Caco-2 (cell line): ENCODE measurements at regions of chr12 and their contacts with region 1.

Region 1: DNA sequence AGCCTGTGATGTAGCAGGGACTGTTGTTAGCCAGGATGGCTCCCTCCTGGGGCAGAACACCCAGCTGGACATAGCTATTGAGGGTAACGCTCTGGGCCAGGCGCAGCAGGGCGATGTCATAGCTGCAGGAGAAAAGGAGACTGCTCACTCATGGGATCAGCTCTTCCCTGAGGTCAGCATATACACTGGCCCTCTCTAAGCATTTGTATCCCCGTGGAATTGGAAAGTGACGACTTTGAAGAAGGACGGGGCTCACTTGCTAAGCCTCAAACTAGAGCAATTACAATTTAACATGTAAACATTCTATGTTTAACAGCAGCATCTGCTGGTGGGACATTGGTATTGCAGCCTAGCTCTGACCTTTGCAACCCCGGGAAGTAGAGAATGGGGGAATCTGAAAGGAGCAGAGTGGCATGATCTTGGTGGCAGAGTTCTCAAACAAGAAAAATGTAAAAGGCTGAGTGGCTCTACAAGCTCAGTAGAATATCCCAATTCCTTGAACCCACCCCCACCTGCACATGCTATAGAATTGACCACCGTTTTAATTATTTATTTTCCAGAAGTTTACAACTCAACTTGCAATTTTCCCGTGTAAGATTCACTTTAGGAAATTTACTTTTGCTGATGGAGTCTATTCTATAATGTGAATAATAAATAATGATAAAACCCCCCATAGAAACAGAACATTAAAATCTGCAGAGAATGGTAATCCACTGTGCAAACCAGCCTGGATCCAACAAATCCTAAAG is 5.0 kb downstream of the CELA1 start:
- DNase-seq: peak; percentile 73 to 84
- H3K4me3 ChIP-seq: peak overlapping the region; percentile 27
- H3K4me3 Mint-ChIP-seq: peak overlapping the region; percentile 67
- H3K27ac Mint-ChIP-seq: peak overlapping the region; percentile 79
- H3K4me1 ChIP-seq: peaks cover 10% of the 10 kb centered on the region
- H3K4me1 Mint-ChIP-seq: peaks cover 24% of the 10 kb centered on the region
- H3K27me3 ChIP-seq: no peaks in the 10 kb centered on the region
- H3K27me3 Mint-ChIP-seq: no peaks in the 10 kb centered on the region
- CTCF ChIP-seq: peak; percentile 99

Region 2: GRCh38 chr12:51047655-51048540 is 293.5 kb before region 1 on chr12 and contains the start of gene LETMD1:
- CTCF ChIA-PET with region 1: interaction called, 4 read pairs
- POLR2A ChIA-PET with region 1: no interaction called
- intact Hi-C with region 1: loop called (anchors 1 kb)
- DNase-seq: peak; percentile 96 to 98
- H3K4me3 ChIP-seq: peak within 1 kb of the TSS; percentile 64
- H3K4me3 Mint-ChIP-seq: peak within 1 kb of the TSS; percentile 99
- H3K27ac Mint-ChIP-seq: peak within 1 kb of the TSS; percentile 96
- H3K4me1 ChIP-seq: no peaks in the 10 kb centered on the region
- H3K4me1 Mint-ChIP-seq: no peaks in the 10 kb centered on the region
- H3K27me3 ChIP-seq: no peaks in the 10 kb centered on the region
- H3K27me3 Mint-ChIP-seq: no peaks in the 10 kb centered on the region
- CTCF ChIP-seq: peak; percentile 93 to 99
- total RNA-seq, gene LETMD1: 90.6 and 95.6 TPM in 2 replicates

Region 3: GRCh38 chr12:51172515-51173431 is 168.7 kb before region 1 on chr12 and contains the start of gene TFCP2:
- CTCF ChIA-PET with region 1: no interaction called
- POLR2A ChIA-PET with region 1: no interaction called
- intact Hi-C with region 1: loop called (anchors 2 kb)
- DNase-seq: peak; percentile 98 to 99
- H3K4me3 ChIP-seq: peak within 1 kb of the TSS; percentile 58
- H3K4me3 Mint-ChIP-seq: no peak within 1 kb of the TSS
- H3K27ac Mint-ChIP-seq: no peak within 1 kb of the TSS
- H3K4me1 ChIP-seq: peaks cover 6% of the 10 kb centered on the region; the same call in 1 of the 2 replicates
- H3K4me1 Mint-ChIP-seq: no peaks in the 10 kb centered on the region
- H3K27me3 ChIP-seq: no peaks in the 10 kb centered on the region
- H3K27me3 Mint-ChIP-seq: no peaks in the 10 kb centered on the region
- CTCF ChIP-seq: peak in 1 of 2 experiments; percentile 25
- total RNA-seq, gene TFCP2: 51.4 and 52.6 TPM in 2 replicates

Region 4: DNA sequence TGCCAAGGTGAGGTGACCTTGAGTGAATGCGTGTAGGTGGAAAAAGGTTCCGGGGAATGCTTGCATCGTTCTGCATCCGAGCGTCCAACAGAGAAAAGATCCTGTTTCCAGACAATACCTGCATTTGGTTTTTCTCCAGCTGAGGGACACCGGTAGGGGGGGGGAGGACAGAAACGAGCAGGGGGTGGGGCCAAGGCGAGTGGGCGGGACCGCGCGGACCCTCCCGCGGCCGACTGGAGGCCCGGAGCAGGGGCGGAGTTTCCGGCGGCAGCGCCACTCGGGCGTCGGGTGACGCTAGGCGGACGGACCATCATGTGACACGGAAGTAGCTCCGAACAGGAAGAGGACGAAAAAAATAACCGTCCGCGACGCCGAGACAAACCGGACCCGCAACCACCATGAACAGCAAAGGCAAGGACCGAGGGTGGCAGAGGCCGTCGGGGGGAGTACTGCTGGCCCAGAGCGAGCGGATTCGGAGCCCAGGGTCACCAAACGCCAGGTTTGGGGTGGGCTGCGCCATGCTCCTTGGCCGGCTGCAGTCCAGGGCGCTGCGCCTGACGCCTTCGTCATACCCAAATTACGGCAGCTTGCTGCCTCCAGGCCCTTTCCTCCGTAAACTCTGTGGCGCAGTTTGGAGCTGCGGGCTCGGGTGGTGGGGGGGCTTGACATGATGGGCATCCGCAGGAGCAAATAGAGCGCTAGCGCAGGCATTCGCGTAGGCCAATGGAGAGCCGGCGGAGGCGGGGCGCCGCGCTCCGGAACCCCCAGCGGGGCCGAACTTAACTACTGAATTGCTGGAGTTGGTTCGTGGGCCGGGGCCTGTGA is 102.7 kb before region 1 on chr12 and contains the start of gene DAZAP2:
- CTCF ChIA-PET with region 1: interaction called, 18 read pairs
- POLR2A ChIA-PET with region 1: interaction called, 8 read pairs
- intact Hi-C with region 1: no loop called
- DNase-seq: peak; percentile 98
- H3K4me3 ChIP-seq: peak within 1 kb of the TSS; percentile 75
- H3K4me3 Mint-ChIP-seq: peak within 1 kb of the TSS; percentile 86
- H3K27ac Mint-ChIP-seq: peak within 1 kb of the TSS; percentile 100
- H3K4me1 ChIP-seq: peaks cover 17% of the 10 kb centered on the region
- H3K4me1 Mint-ChIP-seq: peaks cover 5% of the 10 kb centered on the region
- H3K27me3 ChIP-seq: no peaks in the 10 kb centered on the region
- H3K27me3 Mint-ChIP-seq: no peaks in the 10 kb centered on the region
- CTCF ChIP-seq: peak; percentile 16 to 59
- total RNA-seq, gene DAZAP2: 84.9 and 100 TPM in 2 replicates

Region 5: DNA sequence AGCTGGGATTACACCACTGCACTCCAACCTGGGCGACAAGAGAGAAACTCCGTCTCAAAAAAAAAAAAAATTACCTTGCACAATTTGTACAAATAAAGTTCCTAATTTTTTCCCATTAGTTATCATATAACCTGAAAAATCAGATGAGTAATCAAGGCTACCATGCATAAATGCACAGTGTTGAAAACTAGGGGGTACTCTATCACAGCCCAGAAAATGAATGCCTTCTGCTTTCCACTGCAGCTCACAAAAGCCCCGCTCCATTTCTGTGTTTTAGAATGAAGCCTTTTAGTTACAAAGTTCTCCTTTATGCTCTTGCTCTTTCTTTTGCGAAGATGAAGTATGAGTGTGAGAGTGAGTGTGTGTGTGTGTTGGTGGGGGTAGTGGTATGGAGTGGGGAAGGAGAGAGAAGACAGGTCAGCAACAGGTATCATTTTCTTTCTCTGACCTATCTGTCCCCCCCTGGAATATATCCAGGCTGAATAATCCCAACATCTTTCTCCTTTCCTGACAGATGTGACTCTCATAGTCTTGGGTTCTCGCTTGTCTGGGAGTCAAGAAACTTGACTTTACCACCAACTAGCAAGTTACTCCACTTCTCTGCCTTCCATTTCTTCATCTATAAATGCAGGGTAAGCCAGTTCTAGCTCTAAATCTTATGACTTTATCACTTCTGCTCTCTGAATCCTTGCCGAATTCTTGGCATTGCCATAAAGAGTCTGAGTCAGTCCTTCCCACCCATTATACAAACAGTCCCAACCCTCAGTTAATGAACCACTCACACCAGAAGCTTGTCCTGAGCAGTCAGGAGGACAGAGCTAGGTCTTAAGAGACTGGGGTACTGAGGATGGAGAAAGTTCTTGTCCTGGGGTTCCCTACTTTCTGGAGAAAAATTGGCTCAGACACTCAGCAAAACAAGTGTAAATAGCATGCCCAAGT is 33.5 kb before region 1 on chr12:
- CTCF ChIA-PET with region 1: interaction called, 13 read pairs
- POLR2A ChIA-PET with region 1: no interaction called
- intact Hi-C with region 1: no loop called
- DNase-seq: peak; percentile 54 to 64
- H3K4me3 ChIP-seq: no peak overlapping the region
- H3K4me3 Mint-ChIP-seq: peak overlapping the region; percentile 52
- H3K27ac Mint-ChIP-seq: peak overlapping the region; percentile 86
- H3K4me1 ChIP-seq: peaks cover 20% of the 10 kb centered on the region
- H3K4me1 Mint-ChIP-seq: peaks cover 30% of the 10 kb centered on the region
- H3K27me3 ChIP-seq: no peaks in the 10 kb centered on the region
- H3K27me3 Mint-ChIP-seq: no peaks in the 10 kb centered on the region
- CTCF ChIP-seq: no peak

Region 6: GRCh38 chr12:51326762-51327439 is 14.5 kb before region 1 on chr12:
- CTCF ChIA-PET with region 1: interaction called, 12 read pairs
- POLR2A ChIA-PET with region 1: interaction called, 5 read pairs
- intact Hi-C with region 1: loop called (anchors 2 kb)
- DNase-seq: peak in 1 of 2 experiments; percentile 67
- H3K4me3 ChIP-seq: no peak overlapping the region
- H3K4me3 Mint-ChIP-seq: peak overlapping the region; percentile 3
- H3K27ac Mint-ChIP-seq: peak overlapping the region; percentile 85
- H3K4me1 ChIP-seq: peaks cover 26% of the 10 kb centered on the region
- H3K4me1 Mint-ChIP-seq: peaks cover 37% of the 10 kb centered on the region
- H3K27me3 ChIP-seq: no peaks in the 10 kb centered on the region
- H3K27me3 Mint-ChIP-seq: no peaks in the 10 kb centered on the region
- CTCF ChIP-seq: no peak